ENCODE measurements at regions of chr1 and their contacts with region 1.

Region 1: DNA sequence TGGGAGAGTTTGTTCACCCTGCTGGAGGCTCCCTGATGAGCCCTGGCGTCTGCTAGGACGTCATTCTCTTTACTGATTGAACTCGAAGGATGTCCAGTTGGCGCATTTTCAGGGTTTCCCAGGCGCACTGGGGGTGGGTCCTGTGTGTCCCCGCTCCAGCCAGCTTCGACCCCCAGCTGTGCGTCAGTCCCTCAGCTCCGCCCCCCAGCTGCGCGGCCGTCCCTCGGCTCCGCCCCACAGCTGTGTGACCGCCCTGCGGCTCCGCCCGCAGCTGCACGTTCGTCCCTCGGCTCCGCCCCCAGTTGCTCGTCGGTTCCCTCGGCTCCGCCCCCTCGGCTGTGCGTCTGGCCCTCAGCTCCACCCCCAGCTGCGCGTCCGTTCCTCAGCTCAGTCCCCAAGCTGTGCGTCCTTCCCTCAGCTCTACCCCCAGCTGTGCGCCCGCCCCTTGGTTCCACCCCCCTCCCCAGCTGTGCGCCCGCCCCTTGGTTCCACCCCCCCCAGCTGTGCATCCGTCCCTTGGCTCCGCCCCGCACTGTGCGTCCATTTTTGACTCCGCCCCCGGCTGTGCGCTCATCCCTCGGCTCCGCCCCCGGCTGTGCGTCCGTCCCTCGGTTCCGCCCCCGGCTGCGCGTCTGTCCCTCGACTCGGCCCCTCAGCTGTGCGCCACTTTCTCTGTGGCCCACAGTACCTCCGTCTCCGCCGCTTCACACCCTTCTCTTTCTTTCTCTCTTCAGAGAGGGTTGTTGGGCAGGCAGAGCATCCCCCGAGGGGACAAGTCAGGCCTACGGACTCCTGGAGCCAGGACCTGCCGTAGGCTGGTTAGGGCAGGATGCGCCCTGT is 61.3 kb downstream of the FAAP20 start:
- DNase-seq: peak; percentile 99
- ATAC-seq: peak; percentile 93

Region 2: GRCh38 chr1:2189459-2190425 is 56.5 kb after region 1 on chr1:
- intact Hi-C with region 1: loop called (anchors 5 kb)
- DNase-seq: peak; percentile 97
- ATAC-seq: peak; percentile 93

Region 3: GRCh38 chr1:2227346-2228153 is 94.3 kb after region 1 on chr1:
- intact Hi-C with region 1: no loop called
- DNase-seq: peak; percentile 97
- ATAC-seq: peak; percentile 94

Measured in Right ventricle myocardium inferior (tissue), 1 donor.